ENCODE measurements at regions of chr1 and their contacts with region 1.

Region 1: DNA sequence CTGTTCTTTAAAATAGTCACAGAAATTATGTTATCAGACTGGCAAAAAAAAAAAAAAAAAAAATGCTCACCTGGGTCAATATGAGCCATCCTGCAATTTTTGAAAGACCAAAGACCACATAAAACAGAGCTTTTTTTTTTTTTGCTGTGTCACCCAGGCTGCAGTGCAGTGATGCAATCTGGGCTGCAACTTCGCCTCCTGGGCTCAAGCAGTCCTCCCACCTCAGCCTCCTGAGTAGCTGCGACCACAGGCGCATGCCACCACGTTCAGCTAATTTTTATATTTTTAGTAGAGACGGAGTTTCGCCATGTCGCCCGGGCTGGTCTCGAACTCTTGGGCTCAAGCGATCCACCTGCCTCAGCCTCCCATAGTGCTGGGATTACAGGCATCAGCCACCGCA is 62.8 kb downstream of the RGS13 start:
- DNase-seq: no peak
- H3K4me3 ChIP-seq: no peak overlapping the region
- CTCF ChIP-seq: no peak

Region 2: DNA sequence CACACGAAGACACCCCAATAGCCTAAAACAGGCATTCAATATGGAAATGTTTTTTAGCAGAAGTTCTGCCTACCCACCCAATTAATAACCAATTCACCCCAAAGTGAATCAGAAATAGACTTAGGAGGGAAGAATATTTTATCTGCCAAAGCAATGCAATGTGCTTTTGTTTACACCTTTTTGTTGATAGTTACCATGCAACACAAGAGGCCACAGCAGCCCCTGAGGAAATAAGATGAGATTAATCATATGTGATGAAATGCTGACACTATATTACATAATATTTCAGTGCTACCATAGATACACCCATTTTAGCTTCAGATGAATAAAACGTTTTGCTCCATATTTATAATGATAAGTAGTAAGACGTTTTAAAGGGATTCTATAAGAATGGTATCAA is 49.2 kb after region 1 on chr1:
- in situ Hi-C with region 1: no loop called
- DNase-seq: no peak
- H3K4me3 ChIP-seq: no peak overlapping the region
- CTCF ChIP-seq: no peak

Region 3: DNA sequence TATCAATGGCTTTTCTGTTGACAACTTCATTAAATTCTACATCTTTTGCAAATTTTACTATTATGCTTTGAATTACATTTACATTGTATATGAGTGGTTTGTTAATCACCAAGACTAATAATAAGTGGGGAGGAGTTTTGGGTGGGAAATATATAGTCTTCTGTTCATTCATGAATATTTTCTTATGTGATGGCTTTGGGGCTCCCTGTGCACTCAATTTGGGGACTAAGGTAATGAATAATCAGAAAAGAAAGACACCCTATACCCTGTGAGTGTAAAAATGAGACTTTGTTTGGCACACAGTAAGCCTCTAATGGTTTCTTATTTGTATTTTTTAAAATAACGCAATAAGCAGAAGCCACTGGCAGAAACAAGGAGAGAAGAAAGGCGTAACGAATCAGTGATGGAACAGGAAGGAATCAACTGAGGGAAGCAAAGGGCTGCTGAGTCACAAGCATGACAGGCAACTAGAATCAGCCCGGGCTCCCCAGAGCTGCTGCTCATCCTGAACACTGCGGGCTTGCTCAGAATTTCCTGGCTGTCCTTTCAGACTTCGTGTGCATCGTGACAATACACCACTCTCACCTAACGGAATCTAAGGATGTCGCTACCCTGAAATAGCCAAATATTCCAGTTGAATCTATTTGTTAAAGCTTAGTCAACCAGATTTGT is 89.3 kb after region 1 on chr1:
- in situ Hi-C with region 1: loop called (anchors 5 kb)
- DNase-seq: peak; percentile 50
- H3K4me3 ChIP-seq: no peak overlapping the region
- CTCF ChIP-seq: no peak

Region 4: DNA sequence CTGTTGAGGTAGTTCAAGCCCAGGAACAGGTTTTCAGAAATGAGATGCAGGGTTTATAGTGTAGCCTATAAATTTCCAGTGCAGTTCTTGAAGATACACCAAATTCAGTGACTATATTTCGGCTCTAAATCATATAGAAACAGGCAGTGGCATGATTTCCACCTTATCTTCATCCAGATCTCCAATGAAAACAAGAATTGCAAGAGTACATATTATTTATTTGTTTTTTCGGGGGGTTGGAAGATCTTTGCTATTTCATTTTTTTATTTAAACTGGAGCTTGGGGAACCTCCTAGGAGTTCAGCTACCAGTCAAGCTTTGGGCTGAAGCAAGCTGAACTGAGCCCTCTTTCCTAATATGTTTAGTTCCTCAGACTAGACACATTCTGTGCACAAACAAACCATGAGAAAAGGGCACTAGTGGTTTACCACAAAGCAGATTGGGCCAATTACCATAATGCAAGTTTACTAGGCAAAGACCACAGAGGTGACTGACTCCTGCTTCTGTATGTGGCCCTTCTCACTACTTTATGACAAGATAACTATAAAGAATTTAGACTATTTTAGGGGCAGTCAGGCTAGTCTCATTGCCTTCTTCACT is 178.7 kb after region 1 on chr1:
- in situ Hi-C with region 1: no loop called
- DNase-seq: peak; percentile 32
- H3K4me3 ChIP-seq: no peak overlapping the region
- CTCF ChIP-seq: no peak